ENCODE measurements at regions of chr1 and their contacts with region 1.

Region 1: DNA sequence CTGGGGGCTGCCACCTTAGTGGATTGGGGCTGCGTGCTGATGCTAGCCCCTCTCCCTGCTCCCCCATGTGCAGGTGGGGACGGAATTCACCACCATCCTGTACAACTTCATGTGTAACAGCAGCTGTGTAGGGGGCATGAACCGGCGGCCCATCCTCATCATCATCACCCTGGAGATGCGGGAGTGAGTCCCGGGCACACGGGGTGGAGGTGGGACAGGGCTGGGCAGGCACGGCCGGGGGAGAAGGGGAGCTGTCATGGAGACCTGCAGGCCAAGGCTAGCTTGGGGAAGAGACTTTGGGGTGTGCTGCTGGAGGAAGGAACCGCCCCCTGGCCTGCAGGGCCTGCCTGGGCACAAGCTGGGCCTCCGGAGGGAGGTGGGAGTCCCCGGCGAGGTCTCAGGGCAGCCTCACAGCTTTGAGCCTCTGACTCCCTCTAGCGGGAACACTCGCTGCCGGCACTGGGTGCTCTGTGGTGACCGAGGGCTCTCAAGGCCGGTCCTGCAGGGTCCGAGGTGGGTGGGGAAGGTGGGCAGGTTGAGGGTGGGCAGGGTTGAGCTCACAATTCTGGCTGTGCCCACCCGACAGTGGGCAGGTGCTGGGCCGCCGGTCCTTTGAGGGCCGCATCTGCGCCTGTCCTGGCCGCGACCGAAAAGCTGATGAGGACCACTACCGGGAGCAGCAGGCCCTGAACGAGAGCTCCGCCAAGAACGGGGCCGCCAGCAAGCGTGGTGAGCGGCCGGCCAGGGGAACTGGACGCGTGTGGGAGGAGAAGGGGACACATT is 25.0 kb upstream of the CCDC27 start:
- DNase-seq: no peak
- ATAC-seq: no peak
- H3K4me3 ChIP-seq: no peak overlapping the region
- H3K4me3 Mint-ChIP-seq: no peak overlapping the region
- H3K27ac ChIP-seq: no peak overlapping the region
- H3K27ac Mint-ChIP-seq: no peak overlapping the region
- H3K4me1 ChIP-seq: no peaks in the 10 kb centered on the region
- H3K4me1 Mint-ChIP-seq: peaks cover 1% of the 10 kb centered on the region
- H3K27me3 ChIP-seq: peaks cover 0 to 5% of the 10 kb centered on the region in 2 experiments
- H3K27me3 Mint-ChIP-seq: peaks cover 5% of the 10 kb centered on the region
- CTCF ChIP-seq: no peak

Region 2: GRCh38 chr1:3453203-3453761 is 274.0 kb before region 1 on chr1:
- CTCF ChIA-PET with region 1: interaction called, 19 read pairs
- POLR2A ChIA-PET with region 1: no interaction called
- intact Hi-C with region 1: loop called in 1 of 2 experiments (anchors 1 kb)
- DNase-seq: peak; percentile 51 to 85 (median 74)
- ATAC-seq: peak; percentile 89
- H3K4me3 ChIP-seq: no peak overlapping the region
- H3K4me3 Mint-ChIP-seq: peak overlapping the region; percentile 76
- H3K27ac ChIP-seq: no peak overlapping the region
- H3K27ac Mint-ChIP-seq: no peak overlapping the region
- H3K4me1 ChIP-seq: peaks cover 11% of the 10 kb centered on the region
- H3K4me1 Mint-ChIP-seq: no peaks in the 10 kb centered on the region
- H3K27me3 ChIP-seq: peaks cover 7 to 15% of the 10 kb centered on the region in 2 experiments
- H3K27me3 Mint-ChIP-seq: peaks cover 17% of the 10 kb centered on the region
- CTCF ChIP-seq: peak; percentile 79

Region 3: GRCh38 chr1:3491291-3492246 is 235.7 kb before region 1 on chr1:
- CTCF ChIA-PET with region 1: interaction called, 7 read pairs
- POLR2A ChIA-PET with region 1: no interaction called
- intact Hi-C with region 1: loop called (anchors 1 kb)
- DNase-seq: peak; percentile 80 to 92 (median 86)
- ATAC-seq: peak; percentile 100
- H3K4me3 ChIP-seq: no peak overlapping the region
- H3K4me3 Mint-ChIP-seq: peak overlapping the region; percentile 45
- H3K27ac ChIP-seq: no peak overlapping the region
- H3K27ac Mint-ChIP-seq: no peak overlapping the region
- H3K4me1 ChIP-seq: no peaks in the 10 kb centered on the region
- H3K4me1 Mint-ChIP-seq: peaks cover 5% of the 10 kb centered on the region
- H3K27me3 ChIP-seq: no peaks in the 10 kb centered on the region
- H3K27me3 Mint-ChIP-seq: no peaks in the 10 kb centered on the region
- CTCF ChIP-seq: peak; percentile 99

Region 4: DNA sequence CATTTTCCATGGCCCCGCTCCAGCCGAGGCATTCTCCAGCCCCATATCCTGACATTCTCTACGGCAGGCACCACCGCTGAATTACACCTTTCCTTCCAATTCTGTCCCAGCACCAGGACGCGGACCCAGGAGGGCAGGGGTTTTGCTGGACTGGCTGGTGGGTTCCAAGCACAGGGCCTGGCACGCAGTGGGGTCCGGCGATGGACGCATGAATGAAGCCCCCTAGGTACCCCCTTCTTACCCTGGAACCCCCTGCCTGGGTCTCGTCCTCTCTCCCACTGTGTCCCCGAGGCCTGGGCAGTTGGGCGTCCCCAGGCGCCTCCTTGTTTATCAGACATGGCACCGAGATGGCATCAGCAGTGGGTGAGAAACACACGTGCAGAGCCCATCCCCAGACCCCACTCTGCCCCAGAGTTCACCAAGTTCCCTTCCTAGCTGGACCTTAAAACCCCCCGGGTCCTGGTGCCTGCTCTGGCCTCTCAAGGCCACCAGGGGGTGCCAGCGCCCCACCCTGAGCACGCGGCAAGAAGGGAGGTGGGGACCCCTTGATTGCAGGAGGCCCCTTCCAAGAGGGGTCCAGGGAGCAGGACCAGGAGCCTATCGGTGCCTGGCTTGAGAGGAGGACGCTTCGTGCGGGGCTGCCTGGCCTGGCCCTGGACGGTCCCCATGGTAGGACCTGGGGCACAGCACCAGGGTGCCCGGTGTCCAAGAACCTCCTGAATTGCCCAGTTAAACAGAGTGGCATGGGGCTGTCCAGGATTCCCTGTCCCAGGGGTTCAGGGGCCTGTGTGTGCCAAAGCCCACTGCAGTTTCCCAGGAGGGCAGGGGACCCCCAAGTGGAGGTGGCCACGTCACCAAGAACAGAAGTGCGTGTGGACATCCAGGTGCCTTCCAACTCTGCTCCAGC is 162.1 kb before region 1 on chr1:
- CTCF ChIA-PET with region 1: interaction called, 3 read pairs
- POLR2A ChIA-PET with region 1: no interaction called
- intact Hi-C with region 1: loop called in 1 of 2 experiments (anchors 1 kb)
- DNase-seq: peak in 8 of 9 experiments; percentile 11 to 68 (median 38)
- ATAC-seq: peak; percentile 71
- H3K4me3 ChIP-seq: no peak overlapping the region
- H3K4me3 Mint-ChIP-seq: no peak overlapping the region
- H3K27ac ChIP-seq: no peak overlapping the region
- H3K27ac Mint-ChIP-seq: no peak overlapping the region
- H3K4me1 ChIP-seq: no peaks in the 10 kb centered on the region
- H3K4me1 Mint-ChIP-seq: no peaks in the 10 kb centered on the region
- H3K27me3 ChIP-seq: no peaks in the 10 kb centered on the region
- H3K27me3 Mint-ChIP-seq: no peaks in the 10 kb centered on the region
- CTCF ChIP-seq: peak; percentile 82

Region 5: DNA sequence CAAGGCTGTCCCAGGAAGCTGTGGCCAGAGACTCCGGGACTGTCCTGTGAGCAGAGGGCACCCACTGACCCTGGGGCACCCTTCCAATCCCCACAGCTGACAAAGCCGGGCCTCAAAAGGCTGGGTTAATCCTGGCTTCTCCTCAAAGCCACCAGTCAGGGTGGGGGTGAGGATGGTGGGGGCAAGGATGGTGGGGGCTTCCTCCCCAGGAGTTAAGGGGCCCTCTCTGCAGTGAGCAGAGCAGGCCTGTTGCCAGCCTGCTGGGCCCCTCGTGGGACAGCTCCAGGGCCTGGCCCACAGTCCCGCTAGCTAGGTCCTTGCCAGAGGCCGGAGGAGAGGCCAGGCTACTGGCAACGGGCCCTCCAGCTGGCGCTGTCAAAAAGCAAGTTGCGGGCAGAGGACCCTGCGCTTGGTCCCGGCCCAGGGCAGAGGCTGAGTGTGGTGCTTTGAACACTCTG is 12.9 kb before region 1 on chr1:
- CTCF ChIA-PET with region 1: interaction called, 12 read pairs
- POLR2A ChIA-PET with region 1: no interaction called
- intact Hi-C with region 1: no loop called
- DNase-seq: no peak
- ATAC-seq: no peak
- H3K4me3 ChIP-seq: no peak overlapping the region
- H3K4me3 Mint-ChIP-seq: no peak overlapping the region
- H3K27ac ChIP-seq: no peak overlapping the region
- H3K27ac Mint-ChIP-seq: no peak overlapping the region
- H3K4me1 ChIP-seq: no peaks in the 10 kb centered on the region
- H3K4me1 Mint-ChIP-seq: no peaks in the 10 kb centered on the region
- H3K27me3 ChIP-seq: no peaks in the 10 kb centered on the region
- H3K27me3 Mint-ChIP-seq: peaks cover 17% of the 10 kb centered on the region
- CTCF ChIP-seq: no peak

Measured in CD8-positive, alpha-beta T cell (primary cell).